Stomach (tissue), 19 donors: ENCODE measurements at regions of chr5 and their contacts with region 1.

Region 1: GRCh38 chr5:150428106-150428876 is 15.6 kb upstream of the CD74 start:
- DNase-seq: peak; percentile 72 to 82
- H3K4me3 ChIP-seq: no peak overlapping the region
- H3K27ac ChIP-seq: peak overlapping the region; percentile 19 to 50 (median 25)
- H3K4me1 ChIP-seq: peaks cover 6 to 12% (median 10%) of the 10 kb centered on the region in 4 donors
- H3K27me3 ChIP-seq: no peaks in the 10 kb centered on the region
- CTCF ChIP-seq: no peak
- EP300 ChIP-seq: no peak
- POLR2A ChIP-seq: no peak

Region 2: DNA sequence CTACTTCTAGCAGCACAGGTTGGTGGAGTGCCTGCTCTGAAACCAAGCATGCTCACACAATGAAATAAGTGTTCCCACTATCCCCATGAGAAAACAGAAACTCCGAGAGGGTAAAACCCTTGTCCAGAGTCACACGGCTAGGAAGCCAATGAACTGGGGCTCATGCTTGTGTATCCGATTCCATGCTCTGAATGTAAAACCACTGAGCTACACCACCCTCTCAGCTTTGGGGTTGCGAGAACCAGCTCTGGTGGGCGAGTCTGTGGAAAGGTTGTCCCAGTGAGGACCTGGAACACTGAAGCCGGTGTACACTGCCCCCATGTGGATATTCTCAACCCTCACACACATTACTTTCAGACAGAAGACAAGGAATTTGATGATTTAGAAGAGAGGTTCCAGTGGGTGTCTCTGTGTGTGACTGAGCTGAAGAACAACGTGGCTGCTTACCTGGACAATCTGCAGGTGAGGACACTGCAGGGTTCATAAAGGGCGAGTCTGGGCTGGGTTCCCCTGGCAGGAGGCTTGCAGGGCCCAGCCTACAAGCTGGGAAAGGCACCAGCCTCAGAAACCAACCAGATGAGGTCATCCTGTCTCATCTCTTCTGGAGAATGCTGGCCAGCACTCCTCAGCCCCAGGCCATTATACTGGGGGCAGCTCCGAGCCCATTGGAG is 809.6 kb before region 1 on chr5:
- intact Hi-C with region 1: no loop called
- DNase-seq: peak in 1 of 2 donors; percentile 83
- H3K4me3 ChIP-seq: no peak overlapping the region
- H3K27ac ChIP-seq: peak overlapping the region in 1 of 5 donors; percentile 36
- H3K4me1 ChIP-seq: peaks cover 0 to 37% (median 22%) of the 10 kb centered on the region in 4 donors
- H3K27me3 ChIP-seq: no peaks in the 10 kb centered on the region
- CTCF ChIP-seq: peak in 5 of 7 experiments; percentile 33 to 67 (median 60)
- EP300 ChIP-seq: no peak
- POLR2A ChIP-seq: no peak

Region 3: GRCh38 chr5:150209020-150209635 is 219.2 kb before region 1 on chr5:
- intact Hi-C with region 1: no loop called
- DNase-seq: peak in 1 of 2 donors; percentile 67
- H3K4me3 ChIP-seq: no peak overlapping the region
- H3K27ac ChIP-seq: no peak overlapping the region
- H3K4me1 ChIP-seq: no peaks in the 10 kb centered on the region
- H3K27me3 ChIP-seq: peaks cover 0 to 13% (median 4%) of the 10 kb centered on the region in 3 donors
- CTCF ChIP-seq: no peak
- EP300 ChIP-seq: no peak
- POLR2A ChIP-seq: no peak

Region 4: DNA sequence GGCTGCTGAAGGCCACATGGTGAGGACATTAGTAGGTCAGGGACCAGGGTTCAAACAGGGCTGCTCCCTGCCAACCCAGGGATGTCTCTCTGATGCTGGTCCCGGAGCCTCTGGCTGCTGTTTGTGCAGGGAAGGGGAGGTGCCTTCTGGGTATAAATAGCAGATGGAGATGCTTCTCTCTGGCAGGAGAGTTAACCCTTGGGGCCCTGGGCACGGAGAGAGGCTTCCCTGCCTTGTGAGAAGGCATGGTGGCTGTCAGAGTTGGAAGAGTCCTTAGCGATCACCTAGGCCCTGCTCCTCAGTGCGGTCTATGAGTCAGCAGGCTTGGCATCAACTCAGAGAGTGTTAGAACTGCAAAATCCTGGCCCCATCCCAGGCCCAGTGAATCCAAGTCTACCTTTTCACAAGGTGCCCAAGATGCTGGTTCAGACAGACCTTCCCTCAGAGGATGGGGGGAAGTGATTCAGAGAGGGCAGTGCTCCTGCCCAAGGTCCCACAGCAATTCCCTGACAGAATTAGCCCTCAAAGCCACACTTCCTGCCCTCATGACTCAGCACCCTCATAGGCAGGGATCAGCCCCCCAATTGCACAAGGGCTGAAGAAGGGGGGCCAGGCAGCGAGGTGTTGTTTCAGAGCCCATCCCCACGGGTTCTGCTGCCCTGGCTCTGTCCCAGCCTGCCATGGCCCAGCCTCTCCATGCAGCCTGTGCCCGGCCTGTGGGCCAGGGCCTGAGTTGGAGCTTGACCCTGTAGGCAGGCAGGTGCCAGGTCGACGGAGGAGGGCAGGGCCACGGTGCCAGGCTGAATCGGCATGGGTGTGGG is 164.3 kb before region 1 on chr5:
- intact Hi-C with region 1: loop called (anchors 10 kb)
- DNase-seq: peak; percentile 57 to 72
- H3K4me3 ChIP-seq: no peak overlapping the region
- H3K27ac ChIP-seq: no peak overlapping the region
- H3K4me1 ChIP-seq: peaks cover 0 to 13% (median 12%) of the 10 kb centered on the region in 4 donors
- H3K27me3 ChIP-seq: no peaks in the 10 kb centered on the region
- CTCF ChIP-seq: no peak
- EP300 ChIP-seq: no peak
- POLR2A ChIP-seq: no peak

Region 5: GRCh38 chr5:150473673-150474358 is 45.5 kb after region 1 on chr5:
- intact Hi-C with region 1: no loop called
- DNase-seq: no peak
- H3K4me3 ChIP-seq: no peak overlapping the region
- H3K27ac ChIP-seq: no peak overlapping the region
- H3K4me1 ChIP-seq: peaks cover 0 to 30% (median 0%) of the 10 kb centered on the region in 4 donors
- H3K27me3 ChIP-seq: no peaks in the 10 kb centered on the region
- CTCF ChIP-seq: no peak
- EP300 ChIP-seq: no peak
- POLR2A ChIP-seq: no peak